ENCODE measurements at regions of chr10 and their contacts with region 1.

Region 1: DNA sequence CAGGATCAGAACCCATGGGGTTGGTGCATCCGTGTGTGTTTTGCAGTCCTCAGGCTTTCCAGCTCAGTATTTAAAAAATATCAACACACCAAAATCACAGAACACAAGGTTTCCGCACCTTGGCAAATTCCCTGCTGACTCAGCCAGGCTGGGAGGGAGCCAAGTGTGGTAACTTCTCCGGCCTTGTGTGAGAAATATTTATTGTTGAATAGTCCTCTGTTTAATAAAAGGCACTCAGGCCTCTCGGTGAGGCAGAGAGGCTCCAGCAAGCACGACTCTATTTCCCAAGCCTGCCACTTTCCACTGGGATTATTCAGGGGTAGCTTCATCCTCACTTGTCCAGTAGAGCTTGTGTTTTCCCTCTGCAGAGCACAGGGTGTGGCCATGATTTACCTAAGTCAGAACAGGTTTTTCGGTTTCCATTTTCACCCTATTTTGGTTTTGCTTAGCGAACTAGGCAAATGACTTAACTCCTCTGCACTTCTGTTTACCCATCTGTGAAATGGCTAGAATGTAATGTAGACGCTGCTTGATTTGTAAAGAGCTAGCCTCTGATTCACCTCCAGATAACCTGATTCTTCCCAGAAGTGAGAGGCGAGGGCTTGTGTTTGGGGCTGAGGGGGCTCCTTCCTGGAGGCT is 13.0 kb upstream of the CHST15 start:
- DNase-seq: peak; percentile 89

Region 2: DNA sequence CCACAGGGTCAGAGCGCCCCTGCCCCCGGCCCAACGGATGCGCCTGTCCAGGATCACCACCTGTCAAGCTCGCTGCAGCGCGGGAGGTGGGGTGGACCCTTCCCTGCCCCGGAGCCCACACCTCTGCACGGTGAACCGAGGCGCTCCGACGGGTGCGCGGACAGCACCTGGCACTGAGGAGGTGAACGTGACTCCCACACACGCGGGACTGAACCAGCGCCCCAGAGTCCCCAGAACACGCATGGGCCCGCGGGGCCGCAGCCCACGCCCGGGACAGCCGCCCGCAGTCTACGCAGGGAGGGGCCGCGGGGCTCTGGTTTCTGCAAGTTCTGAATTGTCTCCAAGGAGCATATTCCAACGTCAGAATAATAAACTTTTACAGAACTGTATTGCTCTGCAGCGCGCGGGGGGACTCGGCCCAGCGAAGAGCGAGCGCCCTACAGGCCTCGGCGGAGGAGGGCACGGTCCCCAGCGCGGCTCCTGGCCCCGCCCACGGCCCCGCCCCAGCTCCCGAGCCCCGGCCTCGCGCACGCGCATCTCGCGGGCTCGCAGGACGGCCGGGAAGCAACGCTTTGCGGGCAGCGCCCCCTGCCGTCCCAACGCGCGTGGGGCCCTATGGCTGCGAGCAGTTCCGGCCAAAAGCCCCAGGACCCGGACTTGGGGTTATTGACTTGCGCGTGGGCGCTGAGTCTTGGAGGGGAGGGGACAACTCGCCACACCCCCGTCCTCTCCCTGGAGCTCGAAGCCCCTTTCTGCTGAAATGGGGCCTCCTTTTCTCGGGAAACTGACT is 282.7 kb after region 1 on chr10:
- intact Hi-C with region 1: loop called (anchors 10 kb)
- DNase-seq: peak; percentile 96